Activated naive CD4-positive, alpha-beta T cell treated with anti-CD3 and anti-CD28 coated beads for 36 hours (primary cell): ENCODE measurements at regions of chr3 and their contacts with region 1.

Region 1: DNA sequence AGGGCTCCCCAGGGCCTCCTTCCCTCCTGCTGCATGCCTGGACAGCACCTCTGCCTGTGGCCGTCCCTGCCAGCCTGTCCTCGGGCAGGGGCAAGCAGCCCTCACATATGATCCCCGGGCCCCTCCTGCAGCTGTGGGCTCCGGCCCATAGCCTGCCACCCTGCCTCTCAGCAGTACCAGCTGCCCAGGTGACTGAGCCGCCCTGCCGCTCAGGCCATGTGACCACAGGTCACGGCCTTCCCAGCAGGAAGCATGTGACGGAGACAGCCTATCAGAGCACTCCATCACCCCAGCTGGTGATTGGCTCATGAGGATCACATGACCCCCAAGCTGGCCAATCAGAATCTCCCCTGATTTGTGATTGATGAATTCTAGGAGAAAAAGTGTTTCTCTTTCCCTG is 23.9 kb downstream of the ALDH1L1 start:
- DNase-seq: no peak
- H3K4me3 Mint-ChIP-seq: no peak overlapping the region
- H3K27ac Mint-ChIP-seq: no peak overlapping the region
- H3K4me1 Mint-ChIP-seq: no peaks in the 10 kb centered on the region
- H3K27me3 Mint-ChIP-seq: no peaks in the 10 kb centered on the region

Region 2: GRCh38 chr3:124576565-124577493 is 1579.6 kb before region 1 on chr3:
- CTCF ChIA-PET with region 1: no interaction called
- intact Hi-C with region 1: no loop called
- DNase-seq: no peak
- H3K4me3 Mint-ChIP-seq: no peak overlapping the region
- H3K27ac Mint-ChIP-seq: no peak overlapping the region
- H3K4me1 Mint-ChIP-seq: peaks cover 10% of the 10 kb centered on the region
- H3K27me3 Mint-ChIP-seq: peaks cover 3% of the 10 kb centered on the region

Region 3: GRCh38 chr3:127089486-127090145 is 933.1 kb after region 1 on chr3:
- CTCF ChIA-PET with region 1: no interaction called
- intact Hi-C with region 1: loop called (anchors 10 kb)
- DNase-seq: no peak
- H3K4me3 Mint-ChIP-seq: no peak overlapping the region
- H3K27ac Mint-ChIP-seq: no peak overlapping the region
- H3K4me1 Mint-ChIP-seq: no peaks in the 10 kb centered on the region
- H3K27me3 Mint-ChIP-seq: no peaks in the 10 kb centered on the region